Ascending aorta (tissue), 2 donors: ENCODE measurements at regions of chr3 and their contacts with region 1.

Region 1: GRCh38 chr3:73228437-73228836 is 167.0 kb downstream of the EBLN2 start:
- DNase-seq: no peak
- H3K4me3 ChIP-seq: no peak overlapping the region
- H3K27ac ChIP-seq: no peak overlapping the region
- H3K4me1 ChIP-seq: peaks cover 4 to 17% of the 10 kb centered on the region in 2 donors
- H3K27me3 ChIP-seq: no peaks in the 10 kb centered on the region
- CTCF ChIP-seq: no peak

Region 2: DNA sequence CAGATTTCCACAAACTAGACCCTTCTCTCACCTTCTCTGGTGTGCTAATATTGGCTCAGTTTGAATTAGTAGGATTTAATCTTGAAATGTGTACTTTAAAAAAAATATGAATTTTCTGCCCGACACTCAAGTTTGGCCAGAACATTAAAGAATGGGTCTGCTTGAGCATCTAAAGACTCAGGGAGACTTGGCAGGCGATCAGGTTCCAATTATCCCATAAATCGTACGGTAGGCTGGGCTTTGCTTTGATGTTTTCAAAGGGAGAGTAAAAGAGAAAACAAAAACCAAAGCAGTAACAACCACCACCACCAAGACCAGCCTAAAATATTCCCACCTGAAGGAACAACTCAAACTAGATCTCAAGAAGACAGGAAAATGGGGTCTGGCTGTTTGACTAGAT is 63.8 kb after region 1 on chr3:
- intact Hi-C with region 1: no loop called
- DNase-seq: no peak
- H3K4me3 ChIP-seq: no peak overlapping the region
- H3K27ac ChIP-seq: no peak overlapping the region
- H3K4me1 ChIP-seq: no peaks in the 10 kb centered on the region
- H3K27me3 ChIP-seq: no peaks in the 10 kb centered on the region
- CTCF ChIP-seq: no peak

Region 3: GRCh38 chr3:73490453-73491286 is 262.2 kb after region 1 on chr3:
- intact Hi-C with region 1: loop called (anchors 10 kb)
- DNase-seq: no peak
- H3K4me3 ChIP-seq: no peak overlapping the region
- H3K27ac ChIP-seq: peak overlapping the region in 1 of 2 donors; percentile 12
- H3K4me1 ChIP-seq: peaks cover 4 to 57% of the 10 kb centered on the region in 2 donors
- H3K27me3 ChIP-seq: no peaks in the 10 kb centered on the region
- CTCF ChIP-seq: no peak

Region 4: GRCh38 chr3:74233091-74233490 is 1004.7 kb after region 1 on chr3:
- intact Hi-C with region 1: no loop called
- DNase-seq: no peak
- H3K4me3 ChIP-seq: no peak overlapping the region
- H3K27ac ChIP-seq: no peak overlapping the region
- H3K4me1 ChIP-seq: no peaks in the 10 kb centered on the region
- H3K27me3 ChIP-seq: no peaks in the 10 kb centered on the region
- CTCF ChIP-seq: no peak